Activated B cell treated with CpG ODN at 0.5 μM for 24 hours (primary cell): ENCODE measurements at regions of chr1 and their contacts with region 1.

Region 1: DNA sequence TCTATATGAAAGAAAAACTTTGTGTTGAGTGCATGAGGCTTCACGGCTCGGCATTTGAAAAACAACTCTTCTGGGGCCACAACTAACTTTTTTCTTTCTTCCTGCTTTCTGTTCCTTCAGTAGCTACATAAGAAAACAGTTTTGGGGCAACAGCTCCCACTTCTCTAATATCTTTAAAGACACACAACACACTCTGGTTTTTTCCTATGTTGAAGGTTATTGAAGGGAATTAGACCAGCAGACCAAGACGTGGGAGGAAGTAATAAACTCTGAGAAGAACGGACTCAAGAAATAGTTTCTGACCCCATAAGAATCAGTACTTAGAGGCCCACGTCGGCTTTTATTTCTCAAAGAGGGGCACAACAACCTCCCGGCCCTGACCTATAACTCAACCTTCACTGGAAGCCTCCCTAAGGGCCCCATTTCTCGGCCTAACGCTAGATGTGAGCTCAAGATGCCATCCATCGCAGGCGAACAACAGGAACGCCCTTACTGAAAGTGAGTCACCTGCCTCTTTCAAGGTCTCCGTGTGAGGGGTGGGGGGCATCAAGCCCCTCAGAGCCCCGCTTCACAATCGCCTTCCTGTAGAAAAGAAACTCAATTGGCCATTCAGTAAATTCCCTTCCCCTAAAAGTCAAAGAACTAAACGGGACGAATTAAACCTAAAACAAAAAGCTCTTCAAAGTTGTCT is 844 bp downstream of the ZMYM6 start:
- DNase-seq: peak; percentile 33
- ATAC-seq: peak; percentile 40
- H3K4me3 Mint-ChIP-seq: peak overlapping the region; percentile 99
- H3K27ac Mint-ChIP-seq: peak overlapping the region; percentile 98
- H3K4me1 Mint-ChIP-seq: peaks cover 38% of the 10 kb centered on the region
- H3K27me3 Mint-ChIP-seq: no peaks in the 10 kb centered on the region
- CTCF ChIP-seq: no peak

Region 2: DNA sequence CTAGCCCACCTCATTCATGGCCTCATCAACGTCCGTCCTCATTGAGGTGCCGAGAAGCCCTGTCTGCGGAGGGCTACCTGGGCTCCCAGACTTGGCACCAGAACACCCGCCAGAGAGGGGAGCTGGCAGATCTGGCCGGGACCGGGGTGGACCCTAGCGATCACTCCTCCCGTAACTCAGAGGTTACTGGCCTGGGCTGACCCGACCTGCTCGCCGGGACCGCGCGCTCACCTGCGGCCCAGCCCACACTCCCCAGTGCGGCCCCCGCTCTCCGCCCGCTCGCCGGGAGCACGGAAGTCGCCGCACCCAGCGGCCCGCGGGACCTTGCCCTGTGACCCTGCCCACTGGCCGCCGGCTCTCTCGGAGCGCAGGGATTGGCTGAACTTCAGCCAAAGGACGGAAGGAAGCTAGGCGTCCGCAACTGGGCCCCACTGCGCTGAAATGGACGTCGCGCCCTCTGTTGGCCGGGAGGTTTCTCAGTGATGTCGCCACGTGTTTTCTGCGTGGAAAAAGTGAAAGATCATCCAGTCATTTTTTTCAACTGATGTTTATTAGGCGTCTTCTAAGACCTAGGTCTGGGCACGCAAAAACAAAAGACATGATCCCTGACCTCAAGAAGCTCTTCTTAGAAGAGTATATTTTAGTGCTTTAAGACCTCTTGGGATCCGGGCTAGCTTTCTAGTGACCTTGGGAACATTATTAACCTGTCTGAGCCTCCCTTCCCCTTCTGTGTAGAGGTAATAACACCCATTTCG is 171.3 kb before region 1 on chr1 and contains the start of gene SMIM12:
- CTCF ChIA-PET with region 1: no interaction called
- POLR2A ChIA-PET with region 1: interaction called, 11 read pairs
- intact Hi-C with region 1: loop called (anchors 2 kb)
- DNase-seq: peak; percentile 81
- ATAC-seq: peak; percentile 98
- H3K4me3 Mint-ChIP-seq: peak within 1 kb of the TSS; percentile 94
- H3K27ac Mint-ChIP-seq: peak within 1 kb of the TSS; percentile 82
- H3K4me1 Mint-ChIP-seq: peaks cover 34% of the 10 kb centered on the region
- H3K27me3 Mint-ChIP-seq: no peaks in the 10 kb centered on the region
- CTCF ChIP-seq: no peak
- total RNA-seq, gene SMIM12: 45.9 and 46.3 TPM in 2 replicates

Region 3: GRCh38 chr1:34865981-34866761 is 164.7 kb before region 1 on chr1:
- CTCF ChIA-PET with region 1: no interaction called
- POLR2A ChIA-PET with region 1: interaction called, 14 read pairs
- intact Hi-C with region 1: no loop called
- DNase-seq: peak; percentile 95
- ATAC-seq: peak; percentile 80
- H3K4me3 Mint-ChIP-seq: peak overlapping the region; percentile 90
- H3K27ac Mint-ChIP-seq: peak overlapping the region; percentile 88
- H3K4me1 Mint-ChIP-seq: peaks cover 17% of the 10 kb centered on the region
- H3K27me3 Mint-ChIP-seq: no peaks in the 10 kb centered on the region
- CTCF ChIP-seq: peak; percentile 93

Region 4: DNA sequence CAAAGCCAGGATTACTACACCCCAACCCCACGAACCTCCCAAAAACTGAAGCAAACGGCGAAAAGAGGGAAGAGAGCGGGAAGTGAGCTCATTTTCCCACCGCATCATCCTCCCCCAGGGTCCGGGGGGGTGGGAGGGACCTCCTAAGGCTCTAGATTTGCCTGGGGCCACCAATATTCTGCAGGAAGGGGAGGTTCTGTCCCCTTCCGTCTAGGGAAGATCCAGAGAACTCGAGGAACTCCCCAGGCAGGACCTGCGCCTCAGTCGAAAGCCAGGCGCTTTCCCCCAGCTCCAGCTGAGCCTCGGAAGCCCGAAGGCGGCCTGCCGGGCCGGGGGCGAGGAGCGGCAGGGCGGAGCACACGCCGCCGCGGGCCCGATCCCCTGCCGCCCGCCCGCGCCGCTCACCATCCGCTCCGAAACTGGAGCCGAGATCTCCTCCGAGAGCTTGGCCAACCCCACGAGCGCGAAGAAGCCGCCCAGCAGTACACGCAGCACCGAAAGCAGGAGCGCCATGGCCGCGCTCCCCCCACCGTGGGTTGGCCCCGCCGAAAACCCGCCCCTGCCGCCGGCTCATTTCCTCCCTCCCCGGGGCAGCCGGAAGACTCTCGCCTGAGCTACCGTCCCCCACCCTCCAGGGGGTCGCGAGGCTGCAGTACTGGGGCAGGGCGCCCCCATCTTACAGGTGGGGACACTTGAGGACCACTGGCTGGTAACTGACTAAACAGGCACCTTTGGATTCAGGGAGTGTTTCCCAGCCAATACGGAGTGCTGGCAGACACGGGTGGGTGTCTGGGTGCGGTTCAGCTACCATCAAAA is 45.9 kb before region 1 on chr1 and contains the start of gene TMEM35B:
- CTCF ChIA-PET with region 1: no interaction called
- POLR2A ChIA-PET with region 1: interaction called, 17 read pairs
- intact Hi-C with region 1: loop called (anchors 2 kb)
- DNase-seq: peak; percentile 74
- ATAC-seq: peak; percentile 87
- H3K4me3 Mint-ChIP-seq: peak within 1 kb of the TSS; percentile 97
- H3K27ac Mint-ChIP-seq: peak within 1 kb of the TSS; percentile 89
- H3K4me1 Mint-ChIP-seq: peaks cover 43% of the 10 kb centered on the region
- H3K27me3 Mint-ChIP-seq: no peaks in the 10 kb centered on the region
- CTCF ChIP-seq: no peak
- total RNA-seq, gene TMEM35B: 16.7 and 20.0 TPM in 2 replicates

Region 5: GRCh38 chr1:35005711-35006110 is 25.2 kb before region 1 on chr1:
- CTCF ChIA-PET with region 1: no interaction called
- POLR2A ChIA-PET with region 1: interaction called, 13 read pairs
- intact Hi-C with region 1: no loop called
- DNase-seq: no peak
- ATAC-seq: no peak
- H3K4me3 Mint-ChIP-seq: no peak overlapping the region
- H3K27ac Mint-ChIP-seq: no peak overlapping the region
- H3K4me1 Mint-ChIP-seq: no peaks in the 10 kb centered on the region
- H3K27me3 Mint-ChIP-seq: no peaks in the 10 kb centered on the region
- CTCF ChIP-seq: no peak

Region 6: GRCh38 chr1:35058990-35059389 is 28.1 kb after region 1 on chr1:
- CTCF ChIA-PET with region 1: no interaction called
- POLR2A ChIA-PET with region 1: no interaction called
- intact Hi-C with region 1: no loop called
- DNase-seq: no peak
- ATAC-seq: no peak
- H3K4me3 Mint-ChIP-seq: no peak overlapping the region
- H3K27ac Mint-ChIP-seq: no peak overlapping the region
- H3K4me1 Mint-ChIP-seq: peaks cover 3% of the 10 kb centered on the region
- H3K27me3 Mint-ChIP-seq: peaks cover 25% of the 10 kb centered on the region
- CTCF ChIP-seq: no peak

Region 7: DNA sequence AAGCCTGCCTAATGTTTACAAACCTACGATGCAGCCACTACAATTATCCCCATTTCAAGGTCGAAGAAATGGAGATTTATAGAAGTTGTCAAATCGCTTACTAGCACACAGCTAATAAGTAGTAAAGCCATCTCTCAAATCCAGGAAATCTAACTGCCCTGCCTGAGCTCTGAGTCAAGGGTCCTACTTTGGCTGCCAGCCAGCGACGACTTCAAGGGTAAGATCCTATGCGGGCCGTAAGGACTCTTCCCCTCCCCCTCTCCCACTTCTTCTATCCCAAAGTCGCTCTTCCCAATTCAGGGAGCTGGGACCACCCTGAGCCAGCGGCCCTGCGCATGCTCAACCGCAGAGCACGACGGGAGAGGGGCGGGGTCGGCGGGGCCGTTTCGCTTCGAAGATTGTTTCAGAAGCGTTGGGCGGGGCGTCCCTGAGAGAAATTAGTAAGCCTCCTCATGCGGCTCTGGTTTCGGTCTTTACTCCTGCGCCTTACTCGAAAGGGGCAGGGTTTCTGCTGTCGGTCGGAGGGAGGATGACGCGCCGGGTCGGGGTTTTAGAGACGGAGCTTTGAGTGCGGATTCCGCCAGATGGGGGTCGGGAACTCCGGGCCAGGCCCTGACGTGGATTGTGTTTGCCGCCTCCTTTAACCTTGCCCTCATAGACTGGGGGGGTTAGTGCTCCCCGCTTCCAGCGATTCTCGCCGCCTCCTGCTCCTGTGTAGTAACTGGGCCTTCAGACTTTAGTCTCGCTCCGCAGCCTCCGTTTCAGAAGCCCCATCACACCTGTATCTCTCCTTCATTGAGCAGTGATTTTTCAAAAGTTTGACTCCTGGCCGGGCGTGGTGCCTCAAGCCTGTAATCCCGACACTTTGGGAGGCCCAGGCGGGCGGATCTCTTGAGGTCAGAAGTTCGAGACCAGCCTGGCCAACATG is 48.4 kb after region 1 on chr1 and contains the start of gene ZMYM1:
- CTCF ChIA-PET with region 1: no interaction called
- POLR2A ChIA-PET with region 1: interaction called, 67 read pairs
- intact Hi-C with region 1: loop called (anchors 1 kb)
- DNase-seq: peak; percentile 88
- ATAC-seq: peak; percentile 96
- H3K4me3 Mint-ChIP-seq: peak within 1 kb of the TSS; percentile 95
- H3K27ac Mint-ChIP-seq: peak within 1 kb of the TSS; percentile 98
- H3K4me1 Mint-ChIP-seq: peaks cover 21% of the 10 kb centered on the region
- H3K27me3 Mint-ChIP-seq: peaks cover 4% of the 10 kb centered on the region
- CTCF ChIP-seq: no peak
- total RNA-seq, gene ZMYM1: 7.4 and 9.0 TPM in 2 replicates

Region 8: DNA sequence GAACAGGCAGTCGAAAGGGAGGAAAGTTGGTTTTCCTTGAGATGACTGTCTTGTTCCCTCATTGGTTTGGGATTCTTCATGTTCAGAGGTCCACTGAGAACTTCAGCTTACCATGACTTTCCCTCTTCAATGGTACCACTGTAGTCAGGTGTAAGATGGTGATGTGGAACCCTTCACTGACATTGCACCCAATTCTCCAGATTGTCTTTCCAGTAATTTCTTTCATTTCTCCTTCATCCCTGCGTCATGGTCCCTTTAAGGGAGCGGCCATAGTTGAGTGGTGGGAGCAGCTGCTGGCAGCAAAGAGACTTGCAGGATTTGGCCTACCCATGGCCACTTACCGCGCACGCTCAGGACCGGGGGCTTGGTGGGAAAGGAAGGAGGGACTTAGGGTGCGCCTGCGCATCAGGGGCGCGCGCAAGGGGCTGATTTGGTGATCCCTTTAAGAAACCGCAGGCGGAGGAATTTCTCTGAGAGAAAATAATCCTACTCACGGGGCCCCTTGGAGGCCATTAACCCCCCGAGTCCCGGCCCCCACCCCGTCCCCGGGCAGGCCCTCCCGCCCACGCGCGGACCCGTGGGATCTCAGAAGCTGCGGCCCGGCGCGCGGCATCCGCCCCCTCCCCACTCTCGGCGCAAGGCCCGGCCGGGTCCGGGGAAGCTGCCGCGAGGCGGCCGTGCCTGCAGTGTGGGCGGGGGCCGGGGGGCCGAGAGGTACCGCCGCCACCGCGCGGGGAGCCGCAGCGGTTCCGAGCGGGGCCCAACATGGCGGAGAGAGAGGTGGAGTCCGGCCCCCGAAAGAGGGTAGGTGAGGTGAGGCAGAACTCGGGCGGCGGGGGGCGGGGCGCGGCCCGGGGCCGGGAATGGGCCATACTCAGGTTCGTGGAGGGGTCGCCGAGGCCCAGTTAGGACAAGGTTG is 237.6 kb after region 1 on chr1 and contains the start of gene ZMYM4:
- CTCF ChIA-PET with region 1: no interaction called
- POLR2A ChIA-PET with region 1: interaction called, 9 read pairs
- intact Hi-C with region 1: loop called (anchors 2 kb)
- DNase-seq: peak; percentile 85
- ATAC-seq: peak; percentile 92
- H3K4me3 Mint-ChIP-seq: peak within 1 kb of the TSS; percentile 86
- H3K27ac Mint-ChIP-seq: peak within 1 kb of the TSS; percentile 82
- H3K4me1 Mint-ChIP-seq: peaks cover 28% of the 10 kb centered on the region
- H3K27me3 Mint-ChIP-seq: peaks cover 11% of the 10 kb centered on the region
- CTCF ChIP-seq: no peak
- total RNA-seq, gene ZMYM4: 42.4 and 46.4 TPM in 2 replicates